ENCODE measurements at regions of chr2 and their contacts with region 1.

Region 1: GRCh38 chr2:225002039-225002655 is 40.1 kb downstream of the DOCK10 start:
- DNase-seq: peak; percentile 69
- H3K4me3 ChIP-seq: no peak overlapping the region
- H3K27ac ChIP-seq: no peak overlapping the region
- H3K4me1 ChIP-seq: peaks cover 0 to 4% (median 2%) of the 10 kb centered on the region in 4 donors
- H3K27me3 ChIP-seq: no peaks in the 10 kb centered on the region
- CTCF ChIP-seq: peak; percentile 70 to 88 (median 74)
- EP300 ChIP-seq: no peak
- POLR2A ChIP-seq: no peak

Region 2: GRCh38 chr2:224284134-224284946 is 717.8 kb before region 1 on chr2:
- in situ Hi-C with region 1: no loop called
- intact Hi-C with region 1: no loop called
- DNase-seq: peak; percentile 11
- H3K4me3 ChIP-seq: no peak overlapping the region
- H3K27ac ChIP-seq: no peak overlapping the region
- H3K4me1 ChIP-seq: no peaks in the 10 kb centered on the region
- H3K27me3 ChIP-seq: no peaks in the 10 kb centered on the region
- CTCF ChIP-seq: peak; percentile 60 to 98 (median 67)
- EP300 ChIP-seq: no peak
- POLR2A ChIP-seq: no peak

Region 3: DNA sequence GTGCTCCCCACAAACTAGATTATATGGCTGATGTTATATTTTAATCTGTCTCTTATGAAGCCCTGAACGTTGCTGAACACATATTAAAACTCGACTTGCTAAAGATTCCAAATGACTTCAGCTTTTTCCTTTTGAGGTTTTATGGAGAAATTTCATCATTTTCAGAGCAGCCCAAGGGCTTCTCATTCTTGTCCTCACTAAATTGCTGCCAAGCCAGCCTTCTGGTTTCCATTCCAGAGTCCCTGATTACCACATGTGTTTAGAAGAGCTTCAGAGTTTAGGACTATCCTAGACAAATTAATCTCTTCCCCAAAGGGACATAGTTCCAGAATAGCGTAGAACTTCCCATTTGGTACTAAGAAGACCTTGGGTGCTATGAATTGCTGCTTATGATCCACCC is 208.2 kb before region 1 on chr2:
- in situ Hi-C with region 1: loop called in 1 of 4 experiments (anchors 10 kb)
- intact Hi-C with region 1: no loop called
- DNase-seq: no peak
- H3K4me3 ChIP-seq: no peak overlapping the region
- H3K27ac ChIP-seq: no peak overlapping the region
- H3K4me1 ChIP-seq: no peaks in the 10 kb centered on the region
- H3K27me3 ChIP-seq: no peaks in the 10 kb centered on the region
- CTCF ChIP-seq: no peak
- EP300 ChIP-seq: no peak
- POLR2A ChIP-seq: no peak

Region 4: DNA sequence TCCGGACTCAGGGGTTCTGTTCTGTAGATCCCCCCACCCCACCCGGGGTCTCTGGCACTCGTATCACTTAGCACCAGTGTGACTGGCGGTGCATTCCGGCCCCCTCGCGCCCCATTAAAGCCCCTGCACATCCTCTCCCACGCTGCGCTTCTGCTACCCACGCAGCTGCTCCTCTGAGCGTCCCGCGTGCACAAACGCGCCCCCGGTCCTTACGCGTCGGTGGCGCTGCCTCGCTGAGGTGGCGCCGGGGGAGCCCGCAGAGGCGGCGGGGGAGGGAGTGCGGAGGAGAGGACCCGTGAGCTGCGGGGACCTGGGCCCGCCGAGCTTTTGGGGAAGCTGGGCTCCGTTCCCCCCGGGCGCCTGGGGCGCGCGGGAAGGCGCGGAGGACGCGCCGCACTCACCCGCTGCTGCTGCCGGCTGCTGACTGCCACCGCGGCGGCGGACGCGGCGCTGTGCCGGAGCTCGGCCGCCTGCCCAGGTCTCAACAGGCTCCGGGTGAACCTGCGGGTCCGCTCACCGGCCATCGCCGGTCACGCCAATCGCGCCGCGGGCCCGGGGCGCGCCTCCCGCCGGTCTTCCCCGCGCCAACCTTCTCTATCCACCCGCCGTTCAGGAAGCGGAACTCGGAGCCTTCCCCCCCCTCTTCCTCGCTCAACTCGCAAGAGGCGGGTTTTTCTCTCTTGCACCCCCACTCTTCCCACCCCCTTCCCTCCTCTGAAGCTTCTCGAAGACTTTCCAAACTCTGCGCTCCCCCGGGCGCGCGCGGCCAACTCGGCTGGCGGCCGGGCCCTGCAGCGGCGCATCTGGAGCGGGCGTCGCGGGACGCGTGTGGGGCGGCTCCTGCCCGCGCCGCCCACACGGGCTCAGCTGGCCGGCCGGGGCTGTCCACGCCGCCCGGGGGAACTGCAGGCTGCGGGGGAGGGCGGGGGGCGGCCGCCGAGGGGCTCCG is 40.0 kb after region 1 on chr2 and contains the start of gene DOCK10:
- in situ Hi-C with region 1: no loop called
- intact Hi-C with region 1: loop called (anchors 1 kb)
- DNase-seq: peak; percentile 24
- H3K4me3 ChIP-seq: peak within 1 kb of the TSS; percentile 44 to 86 (median 70)
- H3K27ac ChIP-seq: peak within 1 kb of the TSS; percentile 54 to 76 (median 69)
- H3K4me1 ChIP-seq: peaks cover 0 to 24% (median 9%) of the 10 kb centered on the region in 4 donors
- H3K27me3 ChIP-seq: peaks cover 5% of the 10 kb centered on the region
- CTCF ChIP-seq: no peak
- EP300 ChIP-seq: no peak
- POLR2A ChIP-seq: no peak
- total RNA-seq, gene DOCK10: 5.2 to 64.7 (median 14.5) TPM

Region 5: DNA sequence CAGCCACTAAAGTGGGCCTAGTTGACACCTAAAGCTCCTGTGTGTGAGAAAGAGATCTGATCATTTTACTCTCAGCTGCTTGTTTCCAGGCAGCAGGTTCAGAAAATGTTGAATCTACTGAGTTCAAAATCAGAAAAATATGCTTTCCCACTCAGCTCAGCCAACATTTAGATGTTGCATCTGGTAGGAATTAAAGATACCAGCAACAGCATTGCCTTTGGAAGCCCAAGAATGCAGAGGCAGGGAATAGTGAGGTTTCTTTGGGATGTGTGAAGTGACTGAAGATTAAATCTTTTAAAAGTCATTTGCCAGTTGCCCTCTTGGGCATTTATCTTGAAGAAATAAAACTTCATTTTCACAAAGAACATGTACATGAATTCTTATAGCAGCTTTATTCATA is 74.0 kb after region 1 on chr2:
- in situ Hi-C with region 1: no loop called
- intact Hi-C with region 1: no loop called
- DNase-seq: no peak
- H3K4me3 ChIP-seq: no peak overlapping the region
- H3K27ac ChIP-seq: no peak overlapping the region
- H3K4me1 ChIP-seq: no peaks in the 10 kb centered on the region
- H3K27me3 ChIP-seq: no peaks in the 10 kb centered on the region
- CTCF ChIP-seq: no peak
- EP300 ChIP-seq: no peak
- POLR2A ChIP-seq: no peak

Measured in transverse colon (tissue), 4 donors.